ENCODE measurements at regions of chr10 and their contacts with region 1.

Region 1: DNA sequence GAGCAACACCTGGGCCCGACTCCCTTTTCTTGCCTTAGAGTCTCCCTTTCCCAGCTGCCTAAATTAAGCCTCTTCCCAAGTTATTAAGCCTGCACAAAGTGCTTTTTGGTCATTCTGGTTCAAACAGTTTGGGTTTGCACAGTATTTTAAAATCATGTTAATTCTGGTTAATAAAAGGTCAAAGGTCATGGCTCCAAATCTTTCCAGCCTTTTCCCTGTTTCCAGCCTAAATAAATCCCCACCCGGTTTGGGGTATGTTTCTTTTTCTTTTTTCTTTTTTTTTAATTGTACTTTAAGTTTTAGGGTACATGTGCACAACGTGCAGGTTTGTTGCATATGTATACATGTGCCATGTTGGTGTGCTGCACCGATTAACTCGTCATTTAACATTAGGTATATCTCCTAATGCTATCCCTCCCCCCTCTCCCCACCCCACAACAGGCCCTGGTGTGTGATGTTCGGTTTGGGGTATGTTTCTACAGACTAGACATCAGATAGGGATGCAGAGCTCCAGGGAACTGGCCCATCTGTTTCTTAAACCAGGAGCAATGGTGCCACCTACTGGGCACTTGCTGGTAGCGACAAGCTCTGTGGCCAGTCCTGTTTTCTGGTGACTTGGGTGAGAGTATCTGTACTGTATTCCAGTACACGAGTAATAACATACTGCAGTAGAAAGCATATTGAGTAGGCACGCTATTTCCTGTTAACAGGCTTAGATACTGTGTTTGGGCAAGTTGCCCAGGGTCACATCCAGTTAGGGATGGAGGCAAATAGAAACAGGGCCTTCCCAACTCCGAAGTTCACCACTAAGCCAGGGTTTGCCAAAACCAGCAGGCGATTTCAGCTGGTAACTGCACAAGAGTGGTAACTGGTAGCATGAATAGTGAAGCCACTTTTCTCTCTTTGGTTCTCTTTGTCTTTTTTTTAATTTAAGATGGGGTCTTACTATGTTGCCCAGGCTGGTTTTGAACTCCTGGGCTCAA is 60.6 kb upstream of the TRIM8 start:
- DNase-seq: peak; percentile 59
- ATAC-seq: peak; percentile 98
- H3K4me3 Mint-ChIP-seq: no peak overlapping the region
- H3K27ac Mint-ChIP-seq: no peak overlapping the region
- H3K4me1 Mint-ChIP-seq: no peaks in the 10 kb centered on the region
- H3K27me3 Mint-ChIP-seq: no peaks in the 10 kb centered on the region
- CTCF ChIP-seq: peak; percentile 64

Region 2: GRCh38 chr10:102167861-102168260 is 415.9 kb before region 1 on chr10:
- CTCF ChIA-PET with region 1: interaction called, 18 read pairs
- POLR2A ChIA-PET with region 1: no interaction called
- intact Hi-C with region 1: loop called (anchors 1 kb)
- DNase-seq: no peak
- ATAC-seq: no peak
- H3K4me3 Mint-ChIP-seq: no peak overlapping the region
- H3K27ac Mint-ChIP-seq: no peak overlapping the region
- H3K4me1 Mint-ChIP-seq: peaks cover 5% of the 10 kb centered on the region
- H3K27me3 Mint-ChIP-seq: no peaks in the 10 kb centered on the region
- CTCF ChIP-seq: no peak

Region 3: DNA sequence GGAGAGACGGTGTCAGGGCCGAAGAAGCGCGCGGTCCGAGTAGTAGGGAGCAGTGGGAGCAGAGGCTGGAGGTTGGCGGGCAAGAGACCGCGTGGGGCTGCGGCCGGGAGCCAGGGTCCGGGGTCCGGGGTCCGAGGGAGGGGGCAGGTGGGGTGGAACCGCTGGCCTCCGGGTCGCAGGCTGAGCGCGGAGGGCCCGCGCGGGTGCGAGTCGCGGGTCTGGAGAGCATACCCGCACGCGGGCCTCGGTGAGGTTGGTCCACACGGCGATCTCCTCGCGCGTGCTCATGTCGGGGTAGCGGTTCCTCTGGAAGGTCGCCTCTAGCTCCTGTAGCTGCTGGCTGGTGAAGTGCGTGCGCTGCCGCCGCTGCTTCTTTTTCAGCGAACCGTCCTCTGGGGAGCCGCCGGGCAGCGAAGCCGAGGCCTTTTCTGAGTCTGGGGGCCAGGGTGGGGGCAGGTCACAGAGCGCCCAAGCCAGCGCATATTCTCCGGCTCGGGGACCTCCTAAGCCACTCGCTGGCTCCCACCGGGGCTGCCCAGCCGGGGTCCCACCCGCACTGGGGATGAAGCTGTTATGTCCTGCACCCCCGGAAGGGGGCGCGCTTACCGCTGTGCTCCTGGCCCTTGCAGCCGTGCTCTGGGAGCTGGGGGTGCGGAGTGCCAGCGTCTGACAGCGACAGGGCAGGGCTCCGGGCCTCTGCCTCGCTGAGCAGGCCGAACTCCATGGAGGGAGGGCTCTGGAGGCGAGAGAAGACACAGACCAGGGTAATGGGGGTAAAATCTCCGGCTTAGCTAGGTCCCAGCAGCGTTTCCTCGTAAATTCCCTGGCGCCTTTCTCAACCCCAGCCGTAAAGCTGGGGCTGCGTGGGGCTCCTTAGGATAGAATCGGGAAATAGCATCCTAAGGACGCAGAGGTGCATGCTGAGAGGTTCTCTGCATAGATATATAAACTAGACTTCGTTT is 352.1 kb before region 1 on chr10:
- CTCF ChIA-PET with region 1: interaction called, 55 read pairs
- POLR2A ChIA-PET with region 1: interaction called, 3 read pairs
- intact Hi-C with region 1: loop called (anchors 1 kb)
- DNase-seq: peak; percentile 68
- ATAC-seq: peak; percentile 65
- H3K4me3 Mint-ChIP-seq: peak overlapping the region; percentile 82
- H3K27ac Mint-ChIP-seq: no peak overlapping the region
- H3K4me1 Mint-ChIP-seq: peaks cover 14% of the 10 kb centered on the region
- H3K27me3 Mint-ChIP-seq: peaks cover 57% of the 10 kb centered on the region
- CTCF ChIP-seq: no peak

Region 4: GRCh38 chr10:102384053-102384452 is 199.7 kb before region 1 on chr10:
- CTCF ChIA-PET with region 1: interaction called, 11 read pairs
- POLR2A ChIA-PET with region 1: interaction called, 5 read pairs
- intact Hi-C with region 1: no loop called
- DNase-seq: no peak
- ATAC-seq: peak; percentile 28
- H3K4me3 Mint-ChIP-seq: no peak overlapping the region
- H3K27ac Mint-ChIP-seq: peak overlapping the region; percentile 50
- H3K4me1 Mint-ChIP-seq: peaks cover 18% of the 10 kb centered on the region
- H3K27me3 Mint-ChIP-seq: no peaks in the 10 kb centered on the region
- CTCF ChIP-seq: no peak

Region 5: GRCh38 chr10:102511583-102512274 is 72.0 kb before region 1 on chr10:
- CTCF ChIA-PET with region 1: interaction called, 12 read pairs
- POLR2A ChIA-PET with region 1: no interaction called
- intact Hi-C with region 1: no loop called
- DNase-seq: no peak
- ATAC-seq: peak; percentile 99
- H3K4me3 Mint-ChIP-seq: peak overlapping the region; percentile 42
- H3K27ac Mint-ChIP-seq: peak overlapping the region; percentile 86
- H3K4me1 Mint-ChIP-seq: peaks cover 16% of the 10 kb centered on the region
- H3K27me3 Mint-ChIP-seq: no peaks in the 10 kb centered on the region
- CTCF ChIP-seq: no peak

Measured in activated B cell treated with CpG ODN at 0.5 μM for 24 hours (primary cell).